PC-9 (cell line): ENCODE measurements at regions of chr12 and their contacts with region 1.

Region 1: GRCh38 chr12:67355578-67356379 is 86.6 kb downstream of the CAND1 start:
- DNase-seq: peak; percentile 15 to 68
- H3K4me3 ChIP-seq: no peak overlapping the region
- H3K27ac ChIP-seq: no peak overlapping the region
- H3K4me1 ChIP-seq: peaks cover 31% of the 10 kb centered on the region
- H3K27me3 ChIP-seq: no peaks in the 10 kb centered on the region
- CTCF ChIP-seq: peak; percentile 84

Region 2: GRCh38 chr12:67441736-67442346 is 86.1 kb after region 1 on chr12:
- CTCF ChIA-PET with region 1: no interaction called
- POLR2A ChIA-PET with region 1: no interaction called
- intact Hi-C with region 1: loop called (anchors 1 kb)
- DNase-seq: peak in 1 of 2 experiments; percentile 77
- H3K4me3 ChIP-seq: no peak overlapping the region
- H3K27ac ChIP-seq: no peak overlapping the region
- H3K4me1 ChIP-seq: no peaks in the 10 kb centered on the region
- H3K27me3 ChIP-seq: no peaks in the 10 kb centered on the region
- CTCF ChIP-seq: peak; percentile 57

Region 3: GRCh38 chr12:67498991-67499390 is 143.2 kb after region 1 on chr12:
- CTCF ChIA-PET with region 1: interaction called, 15 read pairs
- POLR2A ChIA-PET with region 1: no interaction called
- intact Hi-C with region 1: no loop called
- DNase-seq: no peak
- H3K4me3 ChIP-seq: no peak overlapping the region
- H3K27ac ChIP-seq: no peak overlapping the region
- H3K4me1 ChIP-seq: no peaks in the 10 kb centered on the region
- H3K27me3 ChIP-seq: no peaks in the 10 kb centered on the region
- CTCF ChIP-seq: no peak

Region 4: DNA sequence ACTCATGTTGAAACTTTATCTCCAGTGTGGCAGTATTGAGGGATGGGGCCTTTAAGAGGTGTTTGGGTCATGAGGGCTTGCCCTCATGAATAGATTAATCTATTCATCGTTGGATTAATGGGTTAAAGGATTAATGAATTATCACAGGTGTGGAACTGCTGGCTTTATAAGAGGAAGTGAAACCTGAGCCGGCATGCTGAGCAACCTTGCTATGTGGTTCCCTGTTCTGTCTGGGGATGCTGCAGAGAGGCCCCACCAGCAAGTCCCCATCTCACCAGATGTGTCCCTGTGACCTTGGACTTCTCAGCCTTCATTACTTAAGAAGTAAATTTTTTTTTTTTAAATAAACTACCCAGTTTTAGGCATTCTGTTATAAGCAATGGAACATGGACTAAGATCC is 402.3 kb after region 1 on chr12:
- CTCF ChIA-PET with region 1: interaction called, 14 read pairs
- POLR2A ChIA-PET with region 1: no interaction called
- intact Hi-C with region 1: no loop called
- DNase-seq: no peak
- H3K4me3 ChIP-seq: no peak overlapping the region
- H3K27ac ChIP-seq: no peak overlapping the region
- H3K4me1 ChIP-seq: peaks cover 14% of the 10 kb centered on the region; the same call in 1 of the 2 replicates
- H3K27me3 ChIP-seq: no peaks in the 10 kb centered on the region
- CTCF ChIP-seq: no peak

Region 5: DNA sequence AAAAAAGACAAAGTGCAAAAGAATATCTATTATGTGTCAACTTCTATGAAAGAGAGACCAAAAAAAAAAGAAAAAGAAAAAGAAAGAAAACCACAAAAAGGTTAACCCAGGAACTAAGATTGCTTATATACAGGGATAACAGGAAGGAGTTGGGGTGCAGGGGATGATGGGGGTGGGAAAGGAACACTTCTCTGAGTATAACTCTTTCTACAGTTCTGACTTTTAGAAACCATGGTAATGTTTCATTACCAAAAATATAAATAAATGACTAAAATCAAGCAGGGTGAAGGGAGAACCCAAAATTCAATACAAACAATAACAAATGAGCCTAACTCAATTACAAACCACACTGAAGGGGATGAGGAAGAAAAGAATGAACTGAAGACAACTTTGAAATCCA is 642.6 kb after region 1 on chr12:
- CTCF ChIA-PET with region 1: interaction called, 11 read pairs
- POLR2A ChIA-PET with region 1: no interaction called
- intact Hi-C with region 1: no loop called
- DNase-seq: peak in 1 of 2 experiments; percentile 18
- H3K4me3 ChIP-seq: no peak overlapping the region
- H3K27ac ChIP-seq: no peak overlapping the region
- H3K4me1 ChIP-seq: no peaks in the 10 kb centered on the region
- H3K27me3 ChIP-seq: no peaks in the 10 kb centered on the region
- CTCF ChIP-seq: no peak

Region 6: DNA sequence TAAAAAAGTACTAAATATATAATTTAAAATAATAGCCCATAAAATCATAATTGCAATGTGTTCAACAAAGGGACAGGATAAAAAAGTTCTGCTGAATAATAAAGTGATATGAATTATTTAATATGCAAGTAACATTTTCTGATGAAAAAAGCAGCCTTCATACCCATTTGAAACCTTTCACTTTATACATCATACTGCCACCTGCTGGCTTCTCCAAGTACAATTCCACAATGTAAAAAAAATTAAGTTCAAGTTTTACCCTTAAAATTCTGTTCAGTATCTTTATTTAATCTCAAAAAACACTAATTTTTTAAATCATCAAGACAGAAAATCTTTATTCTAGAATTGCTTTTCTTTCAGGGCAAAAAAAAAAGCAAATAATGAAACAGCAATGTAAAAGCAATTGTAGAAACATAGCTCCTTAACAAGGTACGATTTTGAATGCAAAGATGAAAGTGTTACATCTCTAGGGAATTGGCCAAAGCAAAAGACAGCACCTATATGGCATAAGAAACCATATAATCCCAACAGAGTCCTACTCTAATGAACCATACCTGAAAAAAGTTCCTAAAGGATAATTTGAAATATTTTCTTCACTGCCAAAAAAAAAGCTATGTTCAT is 961.4 kb after region 1 on chr12:
- CTCF ChIA-PET with region 1: no interaction called
- POLR2A ChIA-PET with region 1: no interaction called
- intact Hi-C with region 1: loop called (anchors 5 kb)
- DNase-seq: peak in 1 of 2 experiments; percentile 2
- H3K4me3 ChIP-seq: no peak overlapping the region
- H3K27ac ChIP-seq: no peak overlapping the region
- H3K4me1 ChIP-seq: no peaks in the 10 kb centered on the region
- H3K27me3 ChIP-seq: no peaks in the 10 kb centered on the region
- CTCF ChIP-seq: peak; percentile 79